PC-9 (cell line): ENCODE measurements at regions of chr10 and their contacts with region 1.

Region 1: GRCh38 chr10:122098924-122099323 is 110.0 kb downstream of the TACC2 start:
- DNase-seq: no peak
- H3K4me3 ChIP-seq: no peak overlapping the region
- H3K27ac ChIP-seq: no peak overlapping the region
- H3K4me1 ChIP-seq: no peaks in the 10 kb centered on the region; the same call in 1 of the 2 replicates
- H3K27me3 ChIP-seq: no peaks in the 10 kb centered on the region
- CTCF ChIP-seq: no peak

Region 2: GRCh38 chr10:121753726-121754476 is 345.0 kb before region 1 on chr10:
- CTCF ChIA-PET with region 1: interaction called, 12 read pairs
- POLR2A ChIA-PET with region 1: no interaction called
- intact Hi-C with region 1: no loop called
- DNase-seq: peak in 1 of 2 experiments; percentile 37
- H3K4me3 ChIP-seq: no peak overlapping the region
- H3K27ac ChIP-seq: 0 out of 2 replicates have a peak overlapping the region, but pooled peaks have one; percentile 9
- H3K4me1 ChIP-seq: no peaks in the 10 kb centered on the region
- H3K27me3 ChIP-seq: no peaks in the 10 kb centered on the region
- CTCF ChIP-seq: no peak

Region 3: DNA sequence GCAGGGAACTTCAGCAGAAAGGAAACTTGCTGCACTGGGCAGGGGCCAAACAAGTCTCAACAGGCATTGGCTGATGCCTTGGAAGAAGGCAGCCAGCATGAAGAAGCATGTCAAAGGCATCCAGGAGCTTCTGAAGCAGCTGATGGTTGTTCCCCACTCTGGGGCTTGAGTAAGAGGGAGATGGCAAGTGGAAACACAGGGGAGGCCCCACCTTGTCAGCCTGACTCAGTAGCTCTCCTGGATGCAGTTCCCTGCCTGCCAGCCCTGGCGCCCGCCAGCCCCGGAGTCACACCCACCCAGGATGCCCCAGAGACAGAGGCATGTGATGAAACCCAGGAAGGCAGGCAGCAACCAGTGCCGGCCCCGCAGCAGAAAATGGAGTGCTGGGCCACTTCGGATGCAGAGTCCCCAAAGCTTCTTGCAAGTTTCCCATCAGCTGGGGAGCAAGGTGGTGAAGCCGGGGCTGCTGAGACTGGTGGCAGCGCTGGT is 13.5 kb before region 1 on chr10:
- CTCF ChIA-PET with region 1: no interaction called
- POLR2A ChIA-PET with region 1: no interaction called
- intact Hi-C with region 1: no loop called
- DNase-seq: no peak
- H3K4me3 ChIP-seq: no peak overlapping the region
- H3K27ac ChIP-seq: no peak overlapping the region
- H3K4me1 ChIP-seq: peaks cover 20% of the 10 kb centered on the region
- H3K27me3 ChIP-seq: no peaks in the 10 kb centered on the region
- CTCF ChIP-seq: no peak

Region 4: GRCh38 chr10:122655524-122656307 is 556.8 kb after region 1 on chr10:
- CTCF ChIA-PET with region 1: no interaction called
- POLR2A ChIA-PET with region 1: no interaction called
- intact Hi-C with region 1: no loop called
- DNase-seq: no peak
- H3K4me3 ChIP-seq: no peak overlapping the region
- H3K27ac ChIP-seq: no peak overlapping the region
- H3K4me1 ChIP-seq: no peaks in the 10 kb centered on the region
- H3K27me3 ChIP-seq: peaks cover 66% of the 10 kb centered on the region
- CTCF ChIP-seq: no peak